MCF 10A (cell line): ENCODE measurements at regions of chr14 and their contacts with region 1.

Region 1: DNA sequence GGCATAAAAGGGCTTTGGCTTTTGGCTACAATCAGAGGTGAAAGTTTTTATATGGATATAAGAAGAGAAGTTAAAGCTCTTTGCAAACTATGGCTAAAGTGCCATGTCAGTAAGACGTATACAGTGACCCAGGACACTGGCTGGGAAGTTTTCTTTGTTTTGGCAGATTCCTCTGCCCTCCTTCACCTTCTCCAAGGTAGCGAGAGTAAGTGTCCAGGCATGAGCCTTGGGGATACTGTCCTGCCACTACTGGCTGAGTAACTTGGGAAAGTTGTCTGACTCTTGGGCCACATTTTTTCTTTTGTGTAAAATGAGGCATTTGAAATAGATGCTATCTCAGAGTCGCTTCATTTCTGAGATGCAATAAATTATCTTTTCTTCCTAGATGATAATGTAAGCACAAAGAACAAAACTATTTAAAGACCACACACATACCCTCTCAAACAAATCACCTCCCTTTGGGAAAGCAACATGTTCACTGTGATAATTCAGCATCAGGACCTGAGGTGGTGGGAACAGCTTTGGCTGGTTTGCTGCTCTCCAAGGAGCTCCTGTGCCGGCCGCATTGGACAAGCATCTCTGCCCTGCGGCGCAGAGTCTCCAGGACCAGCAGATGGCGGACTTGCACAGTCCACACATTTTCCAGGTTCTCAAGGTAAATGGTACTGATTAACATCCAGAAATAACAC is 106.3 kb downstream of the PTCSC3 start:
- DNase-seq: peak; percentile 79
- H3K4me3 Mint-ChIP-seq: peak overlapping the region; percentile 37
- H3K27ac Mint-ChIP-seq: peak overlapping the region; percentile 92
- H3K4me1 Mint-ChIP-seq: peaks cover 10% of the 10 kb centered on the region
- H3K27me3 Mint-ChIP-seq: no peaks in the 10 kb centered on the region
- CTCF ChIP-seq: peak; percentile 82

Region 2: GRCh38 chr14:35883677-35884293 is 186.4 kb before region 1 on chr14:
- CTCF ChIA-PET with region 1: interaction called, 180 read pairs
- POLR2A ChIA-PET with region 1: interaction called, 9 read pairs
- intact Hi-C with region 1: loop called (anchors 1 kb)
- DNase-seq: peak; percentile 41
- H3K4me3 Mint-ChIP-seq: no peak overlapping the region
- H3K27ac Mint-ChIP-seq: no peak overlapping the region
- H3K4me1 Mint-ChIP-seq: peaks cover 14% of the 10 kb centered on the region
- H3K27me3 Mint-ChIP-seq: no peaks in the 10 kb centered on the region
- CTCF ChIP-seq: peak; percentile 66

Region 3: DNA sequence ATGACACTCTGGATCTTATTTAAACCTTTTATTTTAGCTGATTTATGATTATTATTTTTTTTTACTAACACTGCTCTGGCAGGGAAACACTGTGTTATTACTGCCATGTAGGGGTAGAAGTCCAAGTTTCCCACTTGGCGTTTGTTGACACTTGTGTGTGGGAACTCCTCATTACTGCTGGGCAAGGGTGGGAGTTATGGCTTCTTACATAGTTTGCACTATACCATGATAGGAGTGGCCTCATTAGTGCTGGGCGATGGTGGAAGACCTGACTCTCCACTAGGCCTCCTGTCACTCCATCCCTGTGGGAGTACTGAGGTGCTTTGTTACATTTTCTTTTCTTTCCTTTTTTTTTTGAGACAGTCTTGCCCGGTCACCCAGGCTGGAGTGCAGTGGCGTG is 160.5 kb before region 1 on chr14:
- CTCF ChIA-PET with region 1: no interaction called
- POLR2A ChIA-PET with region 1: no interaction called
- intact Hi-C with region 1: no loop called
- DNase-seq: no peak
- H3K4me3 Mint-ChIP-seq: no peak overlapping the region
- H3K27ac Mint-ChIP-seq: no peak overlapping the region
- H3K4me1 Mint-ChIP-seq: no peaks in the 10 kb centered on the region
- H3K27me3 Mint-ChIP-seq: no peaks in the 10 kb centered on the region
- CTCF ChIP-seq: no peak

Region 4: GRCh38 chr14:36028218-36028617 is 42.0 kb before region 1 on chr14:
- CTCF ChIA-PET with region 1: interaction called, 11 read pairs
- POLR2A ChIA-PET with region 1: no interaction called
- intact Hi-C with region 1: no loop called
- DNase-seq: peak; percentile 25
- H3K4me3 Mint-ChIP-seq: no peak overlapping the region
- H3K27ac Mint-ChIP-seq: no peak overlapping the region
- H3K4me1 Mint-ChIP-seq: no peaks in the 10 kb centered on the region
- H3K27me3 Mint-ChIP-seq: no peaks in the 10 kb centered on the region
- CTCF ChIP-seq: no peak

Region 5: DNA sequence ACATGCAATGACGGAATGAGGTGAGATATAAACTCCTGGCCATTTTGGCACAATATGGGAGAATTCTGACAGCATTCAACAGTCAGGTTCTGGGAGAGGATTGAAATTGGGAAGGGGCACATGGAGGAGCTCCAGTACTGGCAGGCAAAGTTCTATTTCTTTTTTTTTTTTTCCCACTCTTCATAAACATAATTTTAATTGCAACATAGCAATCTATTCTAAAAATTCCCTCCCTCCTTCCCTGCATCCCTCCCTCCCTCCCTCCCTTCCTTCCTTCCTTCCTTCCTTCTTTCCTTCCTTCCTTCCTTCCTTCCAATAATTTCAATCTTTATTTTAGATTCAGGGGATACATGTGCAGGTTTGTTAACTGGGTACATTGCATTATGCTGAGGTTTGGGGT is 13.1 kb after region 1 on chr14:
- CTCF ChIA-PET with region 1: interaction called, 22 read pairs
- POLR2A ChIA-PET with region 1: interaction called, 3 read pairs
- intact Hi-C with region 1: no loop called
- DNase-seq: no peak
- H3K4me3 Mint-ChIP-seq: no peak overlapping the region
- H3K27ac Mint-ChIP-seq: no peak overlapping the region
- H3K4me1 Mint-ChIP-seq: no peaks in the 10 kb centered on the region
- H3K27me3 Mint-ChIP-seq: no peaks in the 10 kb centered on the region
- CTCF ChIP-seq: no peak

Region 6: DNA sequence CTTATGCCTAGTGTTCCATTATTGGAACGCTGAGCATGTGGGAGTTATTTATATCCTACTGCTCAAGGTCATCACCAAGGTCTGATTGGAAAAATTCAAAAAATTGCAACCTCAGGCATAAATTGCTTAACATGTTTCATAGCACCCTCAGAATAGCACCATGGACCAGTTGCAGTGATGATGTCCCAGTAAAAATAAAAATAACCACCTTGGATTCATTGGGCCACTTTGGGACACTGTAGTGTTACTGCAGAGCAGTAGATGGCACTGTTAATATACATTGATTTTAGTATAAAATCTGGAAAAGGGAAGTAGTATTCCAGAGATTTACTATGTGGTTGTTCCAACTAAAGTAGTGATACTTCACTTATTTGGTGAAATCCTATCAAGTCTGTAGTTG is 137.3 kb after region 1 on chr14:
- CTCF ChIA-PET with region 1: interaction called, 4 read pairs
- POLR2A ChIA-PET with region 1: no interaction called
- intact Hi-C with region 1: loop called (anchors 1 kb)
- DNase-seq: peak; percentile 22
- H3K4me3 Mint-ChIP-seq: no peak overlapping the region
- H3K27ac Mint-ChIP-seq: no peak overlapping the region
- H3K4me1 Mint-ChIP-seq: no peaks in the 10 kb centered on the region
- H3K27me3 Mint-ChIP-seq: no peaks in the 10 kb centered on the region
- CTCF ChIP-seq: peak; percentile 48

Region 7: GRCh38 chr14:36373982-36374673 is 304.0 kb after region 1 on chr14:
- CTCF ChIA-PET with region 1: interaction called, 85 read pairs
- POLR2A ChIA-PET with region 1: interaction called, 14 read pairs
- intact Hi-C with region 1: loop called (anchors 1 kb)
- DNase-seq: peak; percentile 86
- H3K4me3 Mint-ChIP-seq: no peak overlapping the region
- H3K27ac Mint-ChIP-seq: no peak overlapping the region
- H3K4me1 Mint-ChIP-seq: no peaks in the 10 kb centered on the region
- H3K27me3 Mint-ChIP-seq: no peaks in the 10 kb centered on the region
- CTCF ChIP-seq: peak; percentile 85